ENCODE measurements at regions of chr16 and their contacts with region 1.

Region 1: GRCh38 chr16:31365131-31365865 is 10.3 kb downstream of the ITGAX start:
- DNase-seq: peak; percentile 54 to 66
- ATAC-seq: peak; percentile 83 to 92 (median 88)
- H3K4me3 ChIP-seq: no peak overlapping the region
- H3K4me3 Mint-ChIP-seq: peak overlapping the region; percentile 71
- H3K27ac ChIP-seq: peak overlapping the region; percentile 74
- H3K27ac Mint-ChIP-seq: peak overlapping the region; percentile 81 to 83
- H3K4me1 ChIP-seq: peaks cover 70% of the 10 kb centered on the region
- H3K4me1 Mint-ChIP-seq: peaks cover 52 to 68% of the 10 kb centered on the region in 2 donors
- H3K27me3 ChIP-seq: no peaks in the 10 kb centered on the region
- H3K27me3 Mint-ChIP-seq: peaks cover 0 to 3% of the 10 kb centered on the region in 2 donors
- CTCF ChIP-seq: no peak

Region 2: DNA sequence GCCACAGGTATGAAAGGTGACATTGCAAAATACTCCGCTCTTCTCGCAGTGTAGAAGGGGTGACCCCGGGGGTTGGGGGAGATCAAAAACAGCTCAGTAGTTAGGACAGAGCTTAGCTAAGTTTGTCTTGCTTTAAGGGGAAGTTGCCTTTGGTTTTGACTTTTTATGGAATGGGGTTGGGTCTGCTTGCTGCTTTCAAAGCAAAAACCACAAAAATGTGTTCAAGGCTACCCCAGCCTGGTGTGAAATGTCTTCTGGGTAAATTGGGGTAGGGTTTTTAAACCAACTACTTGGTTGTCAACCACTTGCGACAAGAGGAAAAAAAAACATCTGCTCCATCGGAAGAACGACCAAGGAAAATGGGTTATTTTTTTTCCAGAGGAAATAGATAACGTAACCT is 179.1 kb before region 1 on chr16:
- intact Hi-C with region 1: loop called (anchors 2 kb)
- DNase-seq: peak in 1 of 2 donors; percentile 41
- ATAC-seq: no peak
- H3K4me3 ChIP-seq: no peak overlapping the region
- H3K4me3 Mint-ChIP-seq: peak overlapping the region; percentile 91
- H3K27ac ChIP-seq: no peak overlapping the region
- H3K27ac Mint-ChIP-seq: peak overlapping the region; percentile 80 to 94
- H3K4me1 ChIP-seq: peaks cover 73% of the 10 kb centered on the region
- H3K4me1 Mint-ChIP-seq: peaks cover 97 to 99% of the 10 kb centered on the region in 2 donors
- H3K27me3 ChIP-seq: no peaks in the 10 kb centered on the region
- H3K27me3 Mint-ChIP-seq: no peaks in the 10 kb centered on the region
- CTCF ChIP-seq: no peak

Region 3: DNA sequence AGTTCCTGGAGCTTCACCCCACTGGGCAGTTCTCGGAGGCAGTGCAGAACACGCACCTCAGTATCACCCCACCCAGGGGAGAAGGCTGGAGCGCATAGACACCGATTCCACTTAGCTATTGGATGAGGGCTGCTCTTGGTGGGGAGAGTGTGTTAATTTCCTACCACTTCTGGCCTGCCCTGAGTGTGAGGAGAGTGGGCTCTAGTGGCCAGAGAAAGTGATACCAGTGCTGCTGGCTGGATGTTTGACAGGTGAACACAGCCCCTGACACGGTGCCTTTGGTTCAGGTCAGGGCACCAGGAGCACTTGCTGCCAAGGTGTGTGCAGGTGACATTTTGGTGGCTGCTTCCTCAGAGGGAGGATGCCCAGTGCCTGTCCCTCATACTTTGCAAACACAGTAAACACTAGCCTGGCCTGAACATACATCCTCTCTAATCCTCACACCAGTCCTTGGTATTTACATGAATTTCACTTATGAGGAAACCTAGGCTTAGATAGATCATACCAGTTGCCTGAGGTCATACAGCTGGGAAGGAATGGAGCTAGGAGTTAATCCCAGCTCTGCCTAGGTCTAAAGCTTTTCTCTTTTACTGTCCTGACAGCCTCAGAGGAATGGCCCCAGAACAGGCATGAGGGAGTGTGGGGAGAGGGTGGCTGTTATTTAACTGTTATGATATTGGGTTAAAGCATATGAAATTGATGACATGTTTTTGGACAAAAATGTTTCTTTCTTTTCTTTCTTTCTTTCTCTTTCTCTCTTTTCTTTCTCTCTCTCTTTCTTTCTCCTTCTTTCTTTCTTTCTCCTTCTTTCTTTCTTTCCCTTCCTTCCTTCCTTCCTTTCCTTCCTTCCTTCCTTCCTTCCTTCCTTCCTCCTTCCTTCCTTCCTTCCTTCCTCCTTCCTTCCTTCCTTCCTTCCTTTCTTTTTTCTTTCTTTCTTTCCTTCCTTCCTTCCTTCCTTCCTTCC is 31.3 kb before region 1 on chr16:
- intact Hi-C with region 1: no loop called
- DNase-seq: peak in 1 of 2 donors; percentile 58
- ATAC-seq: peak; percentile 81 to 88 (median 84)
- H3K4me3 ChIP-seq: no peak overlapping the region
- H3K4me3 Mint-ChIP-seq: no peak overlapping the region
- H3K27ac ChIP-seq: no peak overlapping the region
- H3K27ac Mint-ChIP-seq: peak overlapping the region; percentile 53 to 79
- H3K4me1 ChIP-seq: peaks cover 21% of the 10 kb centered on the region
- H3K4me1 Mint-ChIP-seq: peaks cover 37 to 39% of the 10 kb centered on the region in 2 donors
- H3K27me3 ChIP-seq: no peaks in the 10 kb centered on the region
- H3K27me3 Mint-ChIP-seq: peaks cover 4 to 6% of the 10 kb centered on the region in 2 donors
- CTCF ChIP-seq: peak; percentile 21

Region 4: DNA sequence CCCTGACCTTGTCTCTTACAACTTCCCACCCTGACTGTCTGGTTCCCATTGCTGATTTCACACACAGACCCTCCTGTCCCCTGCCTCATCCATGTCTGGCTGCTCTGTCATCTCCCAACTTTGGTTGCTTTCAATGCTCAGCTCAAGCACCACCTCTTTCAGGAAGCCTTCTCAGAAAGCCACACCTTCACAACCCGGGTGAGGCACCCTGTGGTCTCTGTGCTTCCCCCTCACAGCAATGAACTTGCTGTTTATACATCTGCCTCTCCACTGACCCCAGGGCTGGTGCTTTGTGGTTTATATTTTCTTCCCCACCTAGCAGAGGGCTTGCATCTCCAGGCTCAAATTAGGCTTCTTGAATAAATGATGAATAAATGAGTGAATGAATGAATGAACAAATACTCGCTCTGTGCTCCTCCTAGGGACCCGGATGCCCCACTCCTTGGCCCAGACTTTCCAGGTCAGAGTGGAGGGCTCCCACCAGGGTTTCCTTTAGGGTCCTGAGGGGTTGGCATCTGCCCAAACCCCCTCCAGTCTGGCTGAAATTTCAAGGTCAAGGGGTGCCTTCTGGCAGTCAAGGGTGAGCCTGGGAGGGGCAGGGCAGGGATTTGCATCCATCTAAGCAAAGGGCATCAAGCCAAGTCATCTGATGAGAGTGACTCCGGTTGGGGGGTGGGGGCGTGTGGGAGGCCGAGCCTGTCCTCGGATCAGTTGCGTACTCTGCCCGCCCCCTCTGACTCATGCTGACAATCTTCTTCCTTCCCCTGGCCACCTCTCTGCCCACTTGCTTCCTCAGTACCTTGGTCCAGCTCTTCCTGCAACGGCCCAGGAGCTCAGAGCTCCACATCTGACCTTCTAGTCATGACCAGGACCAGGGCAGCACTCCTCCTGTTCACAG is 10.7 kb before region 1 on chr16 and contains the start of gene ITGAX:
- intact Hi-C with region 1: loop called (anchors 1 kb)
- DNase-seq: peak; percentile 71 to 74
- ATAC-seq: peak; percentile 72 to 87 (median 85)
- H3K4me3 ChIP-seq: peak within 1 kb of the TSS; percentile 59
- H3K4me3 Mint-ChIP-seq: peak within 1 kb of the TSS; percentile 92
- H3K27ac ChIP-seq: peak within 1 kb of the TSS; percentile 85
- H3K27ac Mint-ChIP-seq: peak within 1 kb of the TSS; percentile 89 to 95
- H3K4me1 ChIP-seq: peaks cover 92% of the 10 kb centered on the region
- H3K4me1 Mint-ChIP-seq: peaks cover 66 to 73% of the 10 kb centered on the region in 2 donors
- H3K27me3 ChIP-seq: no peaks in the 10 kb centered on the region
- H3K27me3 Mint-ChIP-seq: no peaks in the 10 kb centered on the region
- CTCF ChIP-seq: no peak
- total RNA-seq, gene ITGAX: 224 to 249 (median 233) TPM

Region 5: DNA sequence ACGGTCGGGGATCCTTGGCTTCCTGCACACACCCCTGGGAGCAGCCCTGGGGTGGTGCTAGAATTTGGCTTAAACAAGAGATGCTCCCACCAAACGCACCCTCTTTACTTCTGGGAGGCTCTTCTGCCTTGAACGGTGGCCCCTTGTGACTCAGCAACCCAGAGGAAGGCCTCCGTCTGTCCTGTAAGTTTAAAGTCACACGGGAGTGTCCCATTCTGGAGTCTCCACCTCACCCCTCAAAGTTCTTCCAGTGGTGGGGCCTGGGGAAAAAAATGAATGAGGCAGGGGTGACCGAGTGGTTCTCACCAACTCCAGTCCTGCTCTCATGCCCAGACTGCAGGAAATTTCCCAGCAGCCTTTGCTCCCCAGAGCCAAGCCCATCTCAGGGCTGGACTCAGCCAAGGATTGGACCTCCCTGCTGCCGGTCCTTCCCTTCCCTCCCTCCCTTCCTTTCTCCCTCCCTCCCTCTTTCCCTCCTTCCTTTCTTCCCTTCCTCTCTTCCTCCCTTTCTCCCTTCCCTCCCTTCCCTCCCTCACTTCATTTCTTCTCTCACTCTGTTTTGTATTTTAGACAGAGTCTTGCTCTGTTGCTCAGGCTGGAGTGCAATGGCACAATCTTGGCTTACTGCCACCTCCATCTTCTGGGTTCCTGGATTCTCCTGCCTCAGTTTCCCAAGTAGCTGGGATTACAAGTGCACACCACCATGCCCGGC is 39.2 kb after region 1 on chr16:
- intact Hi-C with region 1: loop called (anchors 5 kb)
- DNase-seq: no peak
- ATAC-seq: no peak
- H3K4me3 ChIP-seq: no peak overlapping the region
- H3K4me3 Mint-ChIP-seq: no peak overlapping the region
- H3K27ac ChIP-seq: no peak overlapping the region
- H3K27ac Mint-ChIP-seq: no peak overlapping the region
- H3K4me1 ChIP-seq: peaks cover 42% of the 10 kb centered on the region
- H3K4me1 Mint-ChIP-seq: peaks cover 33 to 34% of the 10 kb centered on the region in 2 donors
- H3K27me3 ChIP-seq: no peaks in the 10 kb centered on the region
- H3K27me3 Mint-ChIP-seq: no peaks in the 10 kb centered on the region
- CTCF ChIP-seq: no peak

Region 6: GRCh38 chr16:31414706-31415105 is 49.4 kb after region 1 on chr16:
- intact Hi-C with region 1: loop called (anchors 1 kb)
- DNase-seq: peak; percentile 31 to 43
- ATAC-seq: peak; percentile 64 to 91 (median 88)
- H3K4me3 ChIP-seq: no peak overlapping the region
- H3K4me3 Mint-ChIP-seq: peak overlapping the region; percentile 68
- H3K27ac ChIP-seq: no peak overlapping the region
- H3K27ac Mint-ChIP-seq: peak overlapping the region in 1 of 2 donors; percentile 77
- H3K4me1 ChIP-seq: peaks cover 60% of the 10 kb centered on the region
- H3K4me1 Mint-ChIP-seq: peaks cover 58 to 67% of the 10 kb centered on the region in 2 donors
- H3K27me3 ChIP-seq: no peaks in the 10 kb centered on the region
- H3K27me3 Mint-ChIP-seq: no peaks in the 10 kb centered on the region
- CTCF ChIP-seq: no peak

Region 7: DNA sequence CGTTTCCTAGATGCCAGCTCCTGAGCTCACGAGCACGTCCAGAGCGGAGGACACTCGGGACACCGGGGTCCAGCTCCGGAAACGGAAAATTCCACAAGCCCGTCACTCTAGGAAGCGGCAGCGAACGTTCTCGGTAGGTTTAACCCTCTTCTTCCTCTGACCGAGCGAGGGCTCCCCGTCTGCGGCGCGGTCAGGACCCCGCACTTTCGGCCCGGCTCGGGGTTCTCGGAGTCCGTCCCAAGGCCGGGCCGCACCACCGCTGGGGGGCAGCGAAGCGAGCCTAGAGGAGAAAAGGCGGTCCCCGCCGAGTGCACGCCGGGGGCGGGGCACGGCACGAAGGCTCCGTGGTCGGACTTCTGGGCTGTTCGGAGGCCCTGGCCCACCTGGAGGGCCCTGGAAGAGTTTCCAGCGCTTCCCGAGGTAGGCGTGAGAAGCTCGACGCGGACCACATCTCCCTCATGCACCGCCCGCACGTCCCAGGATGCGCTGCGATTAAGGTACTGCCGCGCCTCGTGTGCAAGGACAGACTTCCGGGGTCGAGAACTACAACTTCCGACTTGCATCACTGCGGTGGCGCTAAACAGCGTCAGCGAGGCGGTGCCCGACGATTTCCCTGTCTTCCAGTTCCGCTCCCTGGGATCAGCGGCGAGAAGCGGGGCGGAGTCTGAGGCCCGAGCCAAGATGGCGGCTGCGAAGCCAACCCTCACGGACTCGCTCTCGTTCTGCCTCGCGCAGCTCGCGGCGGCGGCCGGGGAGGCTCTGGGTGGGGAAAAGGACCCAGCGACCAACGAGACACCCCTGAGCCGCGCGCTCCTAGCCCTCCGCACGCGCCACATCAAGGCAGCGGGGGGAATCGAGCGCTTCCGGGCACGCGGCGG is 93.8 kb after region 1 on chr16 and contains the start of gene ARMC5:
- intact Hi-C with region 1: loop called (anchors 1 kb)
- DNase-seq: peak; percentile 92 to 99
- ATAC-seq: peak; percentile 68 to 84 (median 70)
- H3K4me3 ChIP-seq: peak within 1 kb of the TSS; percentile 85
- H3K4me3 Mint-ChIP-seq: peak within 1 kb of the TSS; percentile 94
- H3K27ac ChIP-seq: peak within 1 kb of the TSS; percentile 97
- H3K27ac Mint-ChIP-seq: peak within 1 kb of the TSS; percentile 94 to 97
- H3K4me1 ChIP-seq: peaks cover 60% of the 10 kb centered on the region
- H3K4me1 Mint-ChIP-seq: peaks cover 26 to 37% of the 10 kb centered on the region in 2 donors
- H3K27me3 ChIP-seq: no peaks in the 10 kb centered on the region
- H3K27me3 Mint-ChIP-seq: no peaks in the 10 kb centered on the region
- CTCF ChIP-seq: peak; percentile 58
- total RNA-seq, gene ARMC5: 10.4 to 22.8 (median 16.6) TPM